Left cardiac atrium (tissue), 4 donors: ENCODE measurements at regions of chr17 and their contacts with region 1.

Region 1: GRCh38 chr17:69327060-69327831 is at the start of gene ABCA5:
- DNase-seq: peak; percentile 83
- ATAC-seq: peak; percentile 98
- total RNA-seq, gene ABCA5: 17.8 to 20.7 TPM

Region 2: DNA sequence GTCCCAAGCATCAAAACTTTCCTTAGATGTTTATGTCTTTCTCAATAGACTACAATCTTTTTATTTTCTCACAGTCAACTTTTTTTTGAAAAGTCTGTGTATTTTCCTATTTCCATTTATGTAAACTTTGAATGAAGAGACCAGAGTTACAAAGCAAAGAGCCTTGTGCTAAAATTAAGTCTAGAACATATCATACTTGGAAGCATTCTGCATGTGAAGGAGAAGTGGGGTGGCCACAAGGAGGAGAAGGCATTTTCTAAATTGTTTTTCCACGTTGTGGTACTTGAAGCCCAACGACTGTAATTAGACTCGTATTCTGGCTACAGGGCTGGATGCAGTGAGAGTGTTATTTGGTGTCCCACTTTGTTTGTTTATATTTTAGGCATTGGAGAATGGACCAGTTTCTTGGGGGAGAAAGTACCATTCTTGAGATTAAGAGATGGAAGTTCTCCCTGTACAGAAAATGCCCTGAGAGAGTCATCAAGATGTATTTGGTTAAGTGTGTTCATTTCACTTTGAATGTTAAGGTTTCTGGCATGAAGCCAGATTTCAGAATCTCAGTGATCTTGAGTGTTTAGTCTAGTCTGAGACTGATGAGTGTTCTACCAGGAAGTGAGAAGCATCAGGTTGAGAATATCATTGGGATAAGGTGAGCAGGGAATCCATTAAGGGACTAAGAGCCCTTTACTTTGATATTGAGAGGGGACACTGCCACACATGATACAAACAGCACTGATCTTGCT is 158.8 kb after region 1 on chr17:
- intact Hi-C with region 1: no loop called
- DNase-seq: no peak
- ATAC-seq: no peak

Region 3: GRCh38 chr17:69523244-69523861 is 196.1 kb after region 1 on chr17:
- intact Hi-C with region 1: loop called in 1 of 2 experiments (anchors 5 kb)
- DNase-seq: no peak
- ATAC-seq: peak; percentile 65 to 67